ENCODE measurements at regions of chr12 and their contacts with region 1.

Region 1: GRCh38 chr12:22624870-22625761 is at the start of gene ETNK1:
- DNase-seq: peak; percentile 96 to 98 (median 97)
- ATAC-seq: peak; percentile 99
- H3K4me3 ChIP-seq: peak within 1 kb of the TSS; percentile 79
- H3K4me1 ChIP-seq: peaks cover 21% of the 10 kb centered on the region
- CTCF ChIP-seq: no peak
- total RNA-seq, gene ETNK1: 81.3 to 166 (median 115) TPM

Region 2: GRCh38 chr12:22544038-22544979 is 80.8 kb before region 1 on chr12 and contains the start of gene C2CD5:
- intact Hi-C with region 1: loop called (anchors 5 to 10 kb)
- DNase-seq: peak; percentile 96 to 99 (median 97)
- ATAC-seq: peak; percentile 91
- H3K4me3 ChIP-seq: peak within 1 kb of the TSS; percentile 60
- H3K4me1 ChIP-seq: peaks cover 4% of the 10 kb centered on the region
- CTCF ChIP-seq: peak; percentile 26
- total RNA-seq, gene C2CD5: 56.3 to 68.6 (median 62.4) TPM

Measured in mucosa of descending colon (tissue), 3 donors.